ENCODE measurements at regions of chr1 and their contacts with region 1.

Region 1: DNA sequence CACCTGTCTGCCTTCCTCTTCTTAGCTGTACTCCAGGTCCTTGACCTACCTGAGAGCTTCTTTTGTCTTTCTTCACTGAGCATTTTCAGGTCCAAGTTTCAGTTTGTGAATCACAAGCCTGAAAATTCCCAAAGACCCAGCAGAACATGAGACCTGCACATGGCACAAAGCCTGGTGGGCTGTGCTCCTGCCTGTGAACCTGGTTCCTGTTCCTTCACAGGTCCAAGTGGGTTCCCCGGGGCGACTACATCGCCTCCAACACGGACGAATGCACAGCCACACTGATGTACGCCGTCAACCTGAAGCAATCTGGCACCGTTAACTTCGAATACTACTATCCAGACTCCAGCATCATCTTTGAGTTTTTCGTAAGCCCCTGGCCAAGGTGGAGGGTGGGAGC is 42.1 kb upstream of the SARS1 start:
- DNase-seq: no peak
- H3K4me3 ChIP-seq: no peak overlapping the region
- H3K27ac ChIP-seq: no peak overlapping the region
- H3K4me1 ChIP-seq: no peaks in the 10 kb centered on the region
- H3K27me3 ChIP-seq: no peaks in the 10 kb centered on the region
- CTCF ChIP-seq: no peak
- EP300 ChIP-seq: no peak
- POLR2A ChIP-seq: no peak

Region 2: DNA sequence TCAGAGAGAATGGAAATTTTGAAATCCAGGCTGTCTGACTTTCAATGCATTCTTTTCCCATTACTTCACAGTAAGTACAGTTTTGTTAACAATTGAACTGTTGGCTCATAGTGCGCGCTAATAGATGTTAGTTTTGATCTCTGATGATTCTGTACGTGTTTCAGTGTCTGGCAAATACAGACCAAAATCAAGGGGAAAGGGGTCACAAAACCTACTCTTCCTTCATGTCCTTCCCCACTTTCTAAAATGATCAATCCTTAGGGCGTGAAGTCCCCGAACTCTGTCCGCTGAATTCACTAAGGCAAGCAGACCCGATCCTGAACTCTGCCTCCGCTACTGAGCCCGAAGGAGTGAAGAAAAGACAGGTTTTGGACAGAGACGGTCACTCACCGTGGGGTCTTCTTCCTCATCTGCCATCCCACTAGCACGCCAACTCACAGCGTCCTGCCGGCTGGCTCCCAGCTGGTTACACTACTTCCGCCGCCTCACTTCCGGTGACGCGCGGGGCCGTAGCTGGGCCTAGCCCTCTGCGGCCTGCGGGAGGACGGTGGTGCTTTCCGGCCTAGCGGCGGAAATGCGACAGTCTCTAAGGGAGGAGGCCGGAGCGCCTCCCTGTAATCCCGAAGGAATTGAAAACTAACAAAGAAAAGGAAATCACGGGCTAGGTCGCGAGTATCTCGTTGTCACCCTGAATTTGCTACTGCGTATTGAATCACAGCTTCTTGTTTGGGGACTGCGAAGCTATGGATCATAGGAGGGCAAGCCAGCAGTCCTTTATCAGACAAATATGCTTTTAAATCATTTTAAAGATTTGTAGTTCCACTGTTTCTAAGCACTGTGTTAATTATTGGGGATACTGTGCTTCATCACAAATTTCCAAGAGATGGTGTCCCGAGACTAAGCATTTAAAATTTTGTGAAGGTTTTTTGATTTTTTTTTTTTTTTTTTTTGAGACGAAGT is 95.8 kb before region 1 on chr1 and contains the start of gene TAF13:
- in situ Hi-C with region 1: no loop called
- intact Hi-C with region 1: no loop called
- DNase-seq: peak; percentile 95
- H3K4me3 ChIP-seq: peak within 1 kb of the TSS; percentile 52 to 70 (median 62)
- H3K27ac ChIP-seq: peak within 1 kb of the TSS; percentile 79 to 97 (median 93)
- H3K4me1 ChIP-seq: peaks cover 0 to 18% (median 11%) of the 10 kb centered on the region in 4 donors
- H3K27me3 ChIP-seq: no peaks in the 10 kb centered on the region
- CTCF ChIP-seq: peak; percentile 29 to 76 (median 41)
- EP300 ChIP-seq: no peak
- POLR2A ChIP-seq: peak; percentile 96
- total RNA-seq, gene TAF13: 4.0 to 33.0 (median 32.0) TPM

Region 3: GRCh38 chr1:109208836-109209463 is 37.3 kb after region 1 on chr1:
- in situ Hi-C with region 1: no loop called
- intact Hi-C with region 1: loop called (anchors 1 kb)
- DNase-seq: no peak
- H3K4me3 ChIP-seq: peak overlapping the region in 1 of 4 donors; percentile 15
- H3K27ac ChIP-seq: no peak overlapping the region
- H3K4me1 ChIP-seq: peaks cover 0 to 18% (median 3%) of the 10 kb centered on the region in 4 donors
- H3K27me3 ChIP-seq: no peaks in the 10 kb centered on the region
- CTCF ChIP-seq: no peak
- EP300 ChIP-seq: no peak
- POLR2A ChIP-seq: no peak

Measured in transverse colon (tissue), 4 donors.